ENCODE measurements at regions of chr2 and their contacts with region 1.

Region 1: GRCh38 chr2:86764661-86765307 is 25.9 kb downstream of the CD8A start:
- DNase-seq: no peak
- H3K4me3 ChIP-seq: no peak overlapping the region
- H3K27me3 ChIP-seq: no peaks in the 10 kb centered on the region
- CTCF ChIP-seq: peak; percentile 72

Region 2: DNA sequence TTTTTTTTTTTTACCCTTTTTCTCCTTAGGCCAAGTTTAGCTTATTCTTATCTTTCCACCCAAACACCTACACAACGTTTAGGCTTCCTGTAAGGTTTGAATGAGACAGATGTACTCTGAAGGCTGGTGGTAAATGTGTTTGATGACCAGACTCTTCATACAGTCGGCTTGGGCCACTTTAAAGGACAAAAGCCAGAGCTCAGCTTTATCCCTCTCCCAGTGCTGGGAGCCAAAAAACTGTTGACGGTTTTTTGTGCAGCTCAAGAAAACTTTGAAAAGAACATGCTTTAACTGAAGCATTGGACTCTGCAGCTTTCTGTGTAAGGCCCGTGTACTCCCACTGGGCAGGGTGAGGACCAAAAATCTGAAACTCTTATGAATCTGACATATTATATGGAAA is 10.6 kb after region 1 on chr2:
- CTCF ChIA-PET with region 1: interaction called, 11 read pairs
- POLR2A ChIA-PET with region 1: no interaction called
- DNase-seq: no peak
- H3K4me3 ChIP-seq: no peak overlapping the region
- H3K27me3 ChIP-seq: no peaks in the 10 kb centered on the region
- CTCF ChIP-seq: no peak